ENCODE measurements at regions of chr3 and their contacts with region 1.

Region 1: DNA sequence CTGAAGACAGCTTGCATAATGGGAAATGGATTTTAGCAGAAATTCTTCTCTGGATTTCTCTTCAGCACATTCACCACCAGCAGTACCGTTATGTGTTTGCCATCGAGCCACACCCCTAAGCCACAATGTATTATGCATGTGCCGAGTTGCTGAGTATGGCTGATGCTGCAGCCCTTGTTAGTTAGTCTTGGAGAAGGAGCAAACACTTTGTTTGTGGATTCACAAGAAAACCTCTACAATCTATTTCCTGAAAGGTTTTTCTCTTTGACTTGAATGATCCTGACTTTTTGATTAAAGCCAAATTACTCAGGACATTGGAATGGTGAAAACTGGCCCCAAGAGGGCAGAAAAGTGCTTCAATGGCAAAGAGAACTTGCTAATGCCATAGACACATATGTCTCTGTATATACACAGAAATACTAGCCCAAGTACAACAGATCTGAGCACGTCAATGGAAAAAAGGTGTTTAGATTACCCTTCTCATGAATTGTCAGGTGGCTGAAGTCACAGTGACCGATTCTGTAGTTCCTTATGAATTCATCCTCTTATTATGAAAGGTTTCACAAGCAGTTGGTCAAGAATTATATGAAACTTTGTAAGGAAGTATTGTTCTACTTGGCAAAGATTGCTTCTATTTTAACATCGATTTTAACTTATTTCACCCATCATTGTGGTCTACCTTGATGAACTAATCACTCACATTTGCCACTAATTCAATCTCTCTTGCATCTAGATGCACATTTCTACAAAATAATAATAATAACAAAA is 103.0 kb downstream of the P3H2 start:
- DNase-seq: peak; percentile 46
- H3K4me3 ChIP-seq: no peak overlapping the region
- H3K27ac ChIP-seq: no peak overlapping the region
- H3K4me1 ChIP-seq: peaks cover 6% of the 10 kb centered on the region
- H3K27me3 ChIP-seq: no peaks in the 10 kb centered on the region
- CTCF ChIP-seq: peak in 3 of 4 experiments; percentile 31 to 55 (median 54)
- POLR2A ChIP-seq: no peak

Region 2: GRCh38 chr3:189961525-189962161 is 56.1 kb before region 1 on chr3:
- intact Hi-C with region 1: loop called (anchors 10 kb)
- DNase-seq: peak; percentile 71
- H3K4me3 ChIP-seq: no peak overlapping the region
- H3K27ac ChIP-seq: no peak overlapping the region
- H3K4me1 ChIP-seq: no peaks in the 10 kb centered on the region
- H3K27me3 ChIP-seq: no peaks in the 10 kb centered on the region
- CTCF ChIP-seq: peak; percentile 86 to 95 (median 92)
- POLR2A ChIP-seq: no peak